HEK293 (cell line): ENCODE measurements at regions of chr1 and their contacts with region 1.

Region 1: DNA sequence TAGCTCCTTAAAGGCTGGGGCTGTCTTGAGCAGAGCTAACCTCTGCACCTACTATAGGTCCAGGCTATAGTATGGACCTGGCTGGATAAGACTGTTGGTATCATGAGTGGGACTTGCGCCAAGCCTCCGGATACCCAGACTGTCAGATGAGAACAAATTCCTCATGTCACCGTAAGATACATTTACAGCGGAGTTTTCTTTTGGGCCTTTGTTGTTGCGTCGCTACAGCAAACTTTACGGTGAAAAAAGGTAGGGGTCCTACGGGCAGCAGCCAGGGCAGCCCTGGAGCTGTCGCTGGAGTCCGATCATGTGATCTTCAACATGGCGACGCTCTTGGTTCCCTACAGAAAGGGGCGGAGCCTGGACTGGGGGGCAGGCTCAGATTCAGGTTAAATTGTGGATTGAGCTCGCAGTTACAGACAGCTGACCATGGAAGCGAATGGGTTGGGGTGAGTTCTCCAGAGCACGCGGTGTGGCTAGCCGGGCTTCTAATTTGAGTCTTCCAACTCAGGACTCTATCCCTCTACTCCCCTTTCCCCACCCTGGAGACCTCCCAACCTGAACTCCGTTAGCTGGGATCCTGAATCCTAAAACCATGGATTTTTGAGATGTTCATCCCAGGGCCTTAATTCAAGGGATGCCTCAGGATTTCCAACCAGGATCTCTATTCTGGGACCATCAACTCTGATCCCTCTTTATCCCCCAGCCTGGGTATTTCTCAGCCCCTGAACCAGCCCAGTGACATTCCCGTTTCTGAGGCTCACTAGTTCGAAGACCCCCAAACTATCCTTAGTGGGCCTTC is at the start of gene UROD:
- H3K4me3 ChIP-seq: peak within 1 kb of the TSS; percentile 84
- H3K27ac ChIP-seq: peak within 1 kb of the TSS; percentile 42; the same call in 1 of the 2 replicates
- H3K4me1 ChIP-seq: no peaks in the 10 kb centered on the region
- CTCF ChIP-seq: no peak

Region 2: DNA sequence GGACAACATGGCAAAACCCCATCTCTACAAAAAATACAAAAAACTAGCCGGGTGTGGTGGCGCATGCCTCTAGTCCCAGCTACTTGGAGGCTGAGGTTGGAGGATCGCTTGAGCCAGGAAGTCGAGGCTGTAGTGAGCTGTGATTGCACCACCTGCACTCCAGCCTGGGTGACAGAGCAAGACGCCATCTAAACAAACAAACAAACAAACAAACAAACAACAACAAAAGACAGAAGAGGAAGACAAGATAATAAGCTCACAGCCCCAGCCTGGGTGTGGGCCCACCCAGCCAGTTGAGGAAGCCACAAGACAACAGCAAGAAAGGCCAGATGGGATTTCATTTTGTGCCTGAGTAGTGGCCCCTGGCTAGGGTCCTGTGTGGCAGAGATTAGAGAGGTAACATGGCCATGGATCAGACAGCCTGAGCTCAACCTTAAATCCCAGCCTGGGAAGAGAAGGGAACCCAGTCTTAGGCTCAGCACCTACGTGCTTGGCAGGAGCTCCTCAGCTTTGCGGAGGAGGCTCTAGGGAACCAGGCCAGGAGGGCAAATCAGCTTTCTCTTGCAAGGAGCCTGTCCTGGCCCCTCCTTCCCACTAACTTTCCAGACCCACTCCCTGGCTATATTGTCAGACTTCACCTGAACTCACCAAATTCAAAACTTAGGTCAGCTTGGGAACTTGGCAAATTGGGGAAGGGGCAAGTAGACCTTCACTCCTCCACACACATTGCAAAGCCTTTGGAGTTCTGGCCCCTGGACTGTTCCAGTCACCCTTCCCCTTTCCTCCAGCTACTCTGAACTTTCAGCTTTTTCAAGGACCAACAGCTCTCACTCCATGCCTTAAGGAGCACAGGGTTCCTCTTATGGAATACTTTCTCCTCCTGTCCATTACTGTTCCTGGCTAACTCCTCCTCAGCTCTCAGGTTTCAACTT is 219.0 kb before region 1 on chr1:
- CTCF ChIA-PET with region 1: interaction called, 10 read pairs
- POLR2A ChIA-PET with region 1: interaction called, 8 read pairs
- H3K4me3 ChIP-seq: no peak overlapping the region
- H3K27ac ChIP-seq: no peak overlapping the region
- H3K4me1 ChIP-seq: no peaks in the 10 kb centered on the region
- CTCF ChIP-seq: no peak

Region 3: GRCh38 chr1:44819608-44820327 is 192.3 kb before region 1 on chr1:
- CTCF ChIA-PET with region 1: interaction called, 6 read pairs
- POLR2A ChIA-PET with region 1: interaction called, 16 read pairs
- H3K4me3 ChIP-seq: peak overlapping the region; percentile 31
- H3K27ac ChIP-seq: peak overlapping the region; percentile 91
- H3K4me1 ChIP-seq: no peaks in the 10 kb centered on the region
- CTCF ChIP-seq: no peak

Region 4: DNA sequence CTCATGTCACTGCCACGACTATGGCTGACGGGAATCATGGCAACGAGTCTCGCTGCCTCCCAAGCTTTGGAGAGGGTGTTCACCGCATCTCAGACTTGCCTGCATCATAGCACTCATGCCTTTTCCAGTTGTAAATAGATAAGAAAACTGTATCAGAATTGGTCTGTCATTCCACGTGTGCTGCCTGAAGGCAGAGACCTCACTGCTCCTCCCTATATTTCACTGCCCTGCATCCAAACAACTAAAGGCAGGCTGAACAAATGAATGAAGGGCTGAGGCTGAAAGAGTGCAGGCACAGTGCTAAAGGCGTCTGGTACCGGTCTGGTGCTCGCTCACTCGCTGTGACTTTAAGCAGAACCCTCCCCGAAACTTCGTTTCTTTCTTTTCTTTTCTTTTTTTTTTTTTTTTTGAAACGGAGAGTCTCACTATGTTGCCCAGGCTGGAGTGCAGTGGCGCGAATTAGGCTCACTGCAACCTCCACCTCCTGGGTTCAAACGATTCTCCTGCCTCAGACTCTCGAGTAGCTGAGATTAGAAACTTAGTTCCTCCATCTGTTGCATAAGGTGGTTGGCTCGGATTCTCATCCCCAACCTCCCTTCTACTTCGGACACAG is 26.2 kb before region 1 on chr1:
- CTCF ChIA-PET with region 1: interaction called, 8 read pairs
- POLR2A ChIA-PET with region 1: interaction called, 29 read pairs
- H3K4me3 ChIP-seq: peak overlapping the region; percentile 86
- H3K27ac ChIP-seq: no peak overlapping the region; the same call in 1 of the 2 replicates
- H3K4me1 ChIP-seq: no peaks in the 10 kb centered on the region
- CTCF ChIP-seq: no peak

Region 5: DNA sequence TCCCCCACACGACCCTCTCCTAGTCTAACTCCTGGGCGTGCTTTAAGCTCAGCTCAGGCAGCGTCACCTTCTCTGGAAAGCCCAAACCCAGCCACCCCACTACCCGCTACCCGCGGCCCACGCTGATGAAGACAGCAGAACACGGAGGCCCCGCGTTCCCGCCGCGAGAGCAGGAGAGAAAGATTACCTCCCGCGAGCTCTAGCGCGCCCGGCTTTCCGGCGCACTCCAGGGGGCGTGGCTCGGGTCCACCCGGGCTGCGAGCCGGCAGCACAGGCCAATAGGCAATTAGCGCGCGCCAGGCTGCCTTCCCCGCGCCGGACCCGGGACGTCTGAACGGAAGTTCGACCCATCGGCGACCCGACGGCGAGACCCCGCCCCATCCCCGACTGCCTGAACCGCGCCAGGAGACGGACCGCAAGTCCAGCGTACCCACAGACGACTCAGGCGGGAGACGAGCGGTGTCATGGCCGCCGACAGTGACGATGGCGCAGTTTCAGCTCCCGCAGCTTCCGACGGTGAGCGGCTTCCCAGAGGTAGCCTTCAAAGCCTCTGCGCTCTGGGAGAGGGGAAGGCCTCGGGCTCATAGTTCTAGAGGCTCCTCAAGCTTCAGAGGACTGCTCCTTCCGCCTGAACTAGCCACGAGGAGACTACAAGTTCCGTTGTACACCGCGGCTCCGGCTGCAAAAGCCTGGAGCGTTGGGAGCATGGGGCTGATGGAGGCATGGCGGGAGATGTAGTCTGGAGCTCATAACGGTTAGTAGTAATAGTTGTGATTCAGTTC is 327.9 kb after region 1 on chr1 and contains the starts of genes MUTYH and TOE1:
- CTCF ChIA-PET with region 1: interaction called, 6 read pairs
- POLR2A ChIA-PET with region 1: interaction called, 21 read pairs
- H3K4me3 ChIP-seq: peak within 1 kb of the TSS; percentile 67
- H3K27ac ChIP-seq: peak within 1 kb of the TSS; percentile 75
- H3K4me1 ChIP-seq: no peaks in the 10 kb centered on the region
- CTCF ChIP-seq: no peak